ENCODE measurements at regions of chr13 and their contacts with region 1.

Region 1: DNA sequence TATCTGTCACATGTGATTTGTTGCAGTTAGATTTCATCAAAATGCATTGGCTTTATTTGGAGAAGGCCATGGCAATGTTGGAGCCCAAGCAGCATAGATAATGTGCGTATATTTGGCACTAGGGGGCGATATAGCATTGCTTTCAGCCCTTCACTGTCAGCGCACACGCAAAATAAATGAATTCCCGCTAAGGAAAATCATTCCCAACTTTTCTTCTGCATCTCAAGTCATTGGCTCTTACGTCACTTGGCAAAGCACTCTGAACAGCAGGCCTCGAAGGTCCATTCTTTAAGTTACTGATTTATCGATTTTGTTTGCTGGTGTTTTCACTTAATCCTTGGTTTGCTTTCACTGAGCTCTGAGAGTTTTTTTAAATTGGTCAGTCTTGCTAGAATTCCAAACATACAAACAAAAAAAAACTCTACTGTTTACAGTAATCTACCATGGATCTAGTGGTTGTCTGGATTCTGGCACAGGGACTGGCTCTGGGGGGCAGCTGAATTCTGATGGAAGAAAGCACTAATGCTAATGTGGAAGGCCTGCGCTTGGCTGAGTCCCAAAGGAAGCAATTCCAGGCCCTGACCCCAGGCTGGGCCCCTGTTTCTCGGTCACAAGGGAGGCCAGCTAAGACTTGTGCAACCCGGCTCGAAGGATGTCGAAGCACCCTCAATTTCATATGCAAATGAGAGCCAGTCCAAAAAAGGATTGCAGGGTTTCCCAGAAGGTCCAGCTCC is 97.7 kb upstream of the IPO5 start:
- DNase-seq: peak; percentile 40
- H3K4me3 ChIP-seq: no peak overlapping the region
- H3K27me3 ChIP-seq: no peaks in the 10 kb centered on the region
- CTCF ChIP-seq: peak; percentile 80

Region 2: DNA sequence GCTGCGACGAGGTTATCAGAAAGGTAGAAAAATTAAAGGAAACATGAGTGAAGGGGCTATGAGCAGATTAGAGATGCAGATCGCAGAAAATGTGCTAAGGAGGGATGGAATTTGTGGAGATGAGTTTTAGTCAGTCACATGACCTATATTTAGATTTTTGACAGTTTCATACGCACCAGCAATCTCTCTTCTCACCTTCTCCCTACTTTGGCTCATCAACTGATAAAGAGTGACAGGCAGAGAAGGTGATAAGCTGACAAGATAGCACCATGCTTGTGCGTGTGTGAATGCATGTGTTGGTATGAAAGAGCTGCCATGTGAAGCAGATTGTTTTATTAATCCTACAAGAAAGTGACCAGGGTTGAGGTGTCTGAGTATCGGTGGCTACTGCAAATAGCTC is 169.1 kb before region 1 on chr13:
- CTCF ChIA-PET with region 1: no interaction called
- POLR2A ChIA-PET with region 1: no interaction called
- DNase-seq: no peak
- H3K4me3 ChIP-seq: no peak overlapping the region
- H3K27me3 ChIP-seq: no peaks in the 10 kb centered on the region
- CTCF ChIP-seq: no peak

Region 3: DNA sequence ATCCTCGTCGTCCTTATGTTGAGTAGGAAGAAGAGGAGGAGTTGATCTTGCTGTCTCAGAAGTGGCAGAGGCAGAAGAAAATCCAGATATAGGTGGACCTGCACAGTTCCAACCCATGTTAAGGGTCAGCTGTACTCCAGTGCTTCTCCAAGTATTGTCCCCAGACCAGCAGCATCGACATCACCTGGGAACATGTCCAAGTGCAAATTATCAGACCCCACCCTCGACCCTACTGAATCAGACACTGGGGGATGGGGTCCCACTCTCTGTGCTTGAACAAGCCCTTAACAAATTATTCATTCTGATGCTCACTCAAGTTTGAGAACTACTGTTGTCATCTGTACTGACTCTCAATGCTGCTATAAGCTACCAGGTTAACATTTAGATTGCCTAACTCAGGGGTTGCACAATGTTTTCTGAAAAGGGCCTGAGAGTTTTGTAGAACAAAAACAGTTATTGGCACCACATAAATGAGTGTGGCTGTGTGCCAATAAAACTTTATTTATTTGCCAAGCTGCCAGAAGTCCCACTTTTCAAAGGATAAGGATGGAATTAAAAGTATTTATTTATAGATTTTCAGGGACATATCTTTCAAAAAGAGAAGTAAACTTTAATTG is 129.0 kb before region 1 on chr13:
- CTCF ChIA-PET with region 1: no interaction called
- POLR2A ChIA-PET with region 1: no interaction called
- DNase-seq: no peak
- H3K4me3 ChIP-seq: no peak overlapping the region
- H3K27me3 ChIP-seq: no peaks in the 10 kb centered on the region
- CTCF ChIP-seq: no peak

Region 4: GRCh38 chr13:97986835-97987234 is 131.1 kb after region 1 on chr13:
- CTCF ChIA-PET with region 1: interaction called, 11 read pairs
- POLR2A ChIA-PET with region 1: no interaction called
- DNase-seq: no peak
- H3K4me3 ChIP-seq: no peak overlapping the region
- H3K27me3 ChIP-seq: no peaks in the 10 kb centered on the region
- CTCF ChIP-seq: no peak

Region 5: GRCh38 chr13:98065468-98065867 is 209.7 kb after region 1 on chr13:
- CTCF ChIA-PET with region 1: no interaction called
- POLR2A ChIA-PET with region 1: no interaction called
- DNase-seq: no peak
- H3K4me3 ChIP-seq: no peak overlapping the region
- H3K27me3 ChIP-seq: no peaks in the 10 kb centered on the region; the same call in 1 of the 2 replicates
- CTCF ChIP-seq: 0 out of 2 replicates have a peak, but pooled peaks have one; percentile 4

Region 6: GRCh38 chr13:98411681-98412201 is 556.0 kb after region 1 on chr13:
- CTCF ChIA-PET with region 1: no interaction called
- POLR2A ChIA-PET with region 1: no interaction called
- DNase-seq: no peak
- H3K4me3 ChIP-seq: no peak overlapping the region
- H3K27me3 ChIP-seq: no peaks in the 10 kb centered on the region
- CTCF ChIP-seq: no peak

Measured in BJ (cell line).